ENCODE measurements at regions of chr1 and their contacts with region 1.

Region 1: DNA sequence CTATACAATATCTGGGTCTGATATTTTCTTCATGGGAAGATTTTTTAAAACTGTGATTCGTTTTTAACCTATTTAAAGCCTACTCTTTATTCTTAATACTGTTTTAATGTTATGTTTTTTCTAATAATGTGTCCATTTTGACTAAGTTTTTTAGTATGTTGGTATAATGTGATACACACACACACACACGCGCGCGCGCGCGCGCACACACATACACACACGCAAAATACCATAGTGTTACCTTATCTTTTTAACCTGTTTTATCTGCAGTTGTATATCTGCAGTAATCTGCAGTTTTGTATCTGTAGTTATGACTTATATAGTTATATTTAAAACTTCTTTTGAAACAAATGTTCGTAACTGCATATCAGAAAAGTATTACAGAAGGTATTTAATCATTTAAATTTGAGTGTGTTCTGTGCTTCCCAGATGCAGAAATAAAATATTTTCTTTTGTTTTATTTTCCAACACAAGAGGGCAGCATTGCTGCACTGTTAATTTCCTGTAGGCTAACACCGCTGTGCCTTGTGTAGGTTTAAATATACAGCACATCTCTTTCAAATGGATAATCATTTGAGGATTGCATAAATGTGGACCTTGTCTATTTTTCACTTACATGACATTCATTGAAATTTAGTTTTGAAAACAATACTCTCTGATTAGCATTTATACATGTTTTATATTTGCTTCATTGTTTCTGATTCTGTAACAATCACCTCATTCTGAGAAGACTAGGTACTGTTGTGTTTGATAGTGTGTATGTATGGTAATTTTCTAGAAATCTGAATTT is 166.1 kb downstream of the PDE4B start:
- DNase-seq: peak; percentile 43 to 55 (median 48)
- ATAC-seq: peak; percentile 85
- H3K4me3 ChIP-seq: no peak overlapping the region
- H3K27ac ChIP-seq: no peak overlapping the region
- H3K4me1 ChIP-seq: no peaks in the 10 kb centered on the region
- H3K27me3 ChIP-seq: peaks cover 3 to 7% of the 10 kb centered on the region in 2 experiments; a peak in 2 of 5 replicates
- CTCF ChIP-seq: peak; percentile 51 to 87 (median 75); a peak in 5 of 6 replicates
- EP300 ChIP-seq: no peak
- POLR2A ChIP-seq: no peak
- RAD21 ChIP-seq: peak; percentile 78 to 89

Region 2: DNA sequence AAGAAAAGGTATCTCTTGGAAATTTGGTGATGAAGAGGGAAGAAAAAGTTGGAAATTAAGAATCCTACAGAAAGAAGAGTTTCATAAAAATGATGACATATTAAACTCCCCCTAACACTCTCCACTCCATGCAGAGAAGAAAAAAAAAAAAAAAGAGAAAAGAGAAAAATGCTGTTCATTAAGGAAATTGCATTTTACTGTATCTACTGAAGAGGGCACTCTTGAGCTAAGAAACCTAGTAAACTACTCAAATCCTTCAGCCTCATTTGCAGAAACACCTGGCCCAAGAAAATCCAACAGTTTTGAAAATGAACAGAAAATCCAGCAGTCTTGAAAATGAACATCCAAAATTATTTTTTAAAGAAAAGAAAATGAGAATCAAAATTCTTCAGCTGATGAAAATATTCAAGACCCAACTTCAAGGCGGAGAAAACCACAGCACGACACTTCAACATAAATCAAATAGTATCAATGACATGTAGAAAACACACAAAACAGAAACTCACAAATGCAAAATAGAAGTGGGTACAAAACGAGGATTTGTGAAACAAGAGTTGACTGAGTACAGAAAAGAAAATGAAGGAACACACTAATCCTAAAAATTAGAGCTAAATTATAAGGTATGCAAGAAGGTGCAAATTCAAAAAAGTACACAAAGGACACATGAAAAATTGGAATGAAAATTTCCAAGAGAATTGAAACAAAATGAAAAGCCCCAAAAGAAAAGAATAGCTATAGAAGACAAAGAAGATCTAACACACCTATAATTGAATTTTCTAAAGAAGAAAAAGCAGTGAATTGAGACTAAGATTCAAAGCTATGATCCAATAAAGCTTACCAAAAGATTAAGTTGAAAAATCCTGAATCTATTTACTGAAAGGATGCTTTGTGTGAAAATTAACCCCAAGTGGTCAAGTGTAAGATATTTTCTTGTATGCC is 722.6 kb before region 1 on chr1:
- CTCF ChIA-PET with region 1: no interaction called
- POLR2A ChIA-PET with region 1: no interaction called
- in situ Hi-C with region 1: no loop called
- intact Hi-C with region 1: loop called (anchors 10 kb)
- DNase-seq: peak in 3 of 4 experiments; percentile 24 to 81 (median 43)
- ATAC-seq: peak; percentile 5; the same call in 2 of the 3 replicates
- H3K4me3 ChIP-seq: no peak overlapping the region
- H3K27ac ChIP-seq: no peak overlapping the region
- H3K4me1 ChIP-seq: peaks cover 29 to 42% of the 10 kb centered on the region in 2 experiments; a peak in 4 of 5 replicates
- H3K27me3 ChIP-seq: no peaks in the 10 kb centered on the region
- CTCF ChIP-seq: peak; percentile 42 to 81 (median 70); a peak in 5 of 6 replicates
- EP300 ChIP-seq: no peak
- POLR2A ChIP-seq: no peak
- RAD21 ChIP-seq: peak; percentile 74 to 91

Region 3: DNA sequence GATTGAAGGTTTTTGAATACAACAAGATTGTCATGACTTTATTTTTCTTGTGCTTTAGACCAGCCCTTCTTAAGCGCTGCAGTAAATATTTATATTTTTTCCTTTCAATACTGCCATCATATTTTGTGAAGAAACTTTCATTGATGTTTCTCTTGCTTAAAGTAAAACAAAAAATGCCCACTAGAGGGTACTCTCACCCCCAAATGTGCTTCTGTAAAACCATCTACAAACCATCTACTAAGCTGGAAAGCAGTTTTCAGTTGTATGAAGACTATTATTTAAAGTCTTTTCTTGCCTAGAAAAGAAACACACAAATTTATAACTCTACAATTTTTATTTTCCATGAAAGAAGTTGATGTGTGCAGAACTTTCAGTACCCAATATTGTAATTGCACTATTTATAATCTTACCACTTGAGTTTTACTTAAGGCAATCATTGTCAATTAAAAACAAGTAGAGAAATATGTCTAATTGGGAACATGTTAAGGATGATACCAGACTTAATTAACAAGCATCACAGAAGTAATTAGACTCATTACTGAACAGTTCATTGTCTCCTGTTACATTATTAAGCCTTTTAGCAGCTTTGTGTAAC is 527.5 kb before region 1 on chr1:
- CTCF ChIA-PET with region 1: no interaction called
- POLR2A ChIA-PET with region 1: no interaction called
- in situ Hi-C with region 1: no loop called
- intact Hi-C with region 1: loop called (anchors 10 kb)
- DNase-seq: peak; percentile 31 to 65 (median 40)
- ATAC-seq: peak; percentile 63
- H3K4me3 ChIP-seq: no peak overlapping the region
- H3K27ac ChIP-seq: no peak overlapping the region
- H3K4me1 ChIP-seq: peaks cover 0 to 6% of the 10 kb centered on the region in 2 experiments; a peak in 3 of 5 replicates
- H3K27me3 ChIP-seq: no peaks in the 10 kb centered on the region
- CTCF ChIP-seq: peak; percentile 43 to 70 (median 50); a peak in 4 of 6 replicates
- EP300 ChIP-seq: no peak
- POLR2A ChIP-seq: no peak
- RAD21 ChIP-seq: peak; percentile 74 to 84

Region 4: DNA sequence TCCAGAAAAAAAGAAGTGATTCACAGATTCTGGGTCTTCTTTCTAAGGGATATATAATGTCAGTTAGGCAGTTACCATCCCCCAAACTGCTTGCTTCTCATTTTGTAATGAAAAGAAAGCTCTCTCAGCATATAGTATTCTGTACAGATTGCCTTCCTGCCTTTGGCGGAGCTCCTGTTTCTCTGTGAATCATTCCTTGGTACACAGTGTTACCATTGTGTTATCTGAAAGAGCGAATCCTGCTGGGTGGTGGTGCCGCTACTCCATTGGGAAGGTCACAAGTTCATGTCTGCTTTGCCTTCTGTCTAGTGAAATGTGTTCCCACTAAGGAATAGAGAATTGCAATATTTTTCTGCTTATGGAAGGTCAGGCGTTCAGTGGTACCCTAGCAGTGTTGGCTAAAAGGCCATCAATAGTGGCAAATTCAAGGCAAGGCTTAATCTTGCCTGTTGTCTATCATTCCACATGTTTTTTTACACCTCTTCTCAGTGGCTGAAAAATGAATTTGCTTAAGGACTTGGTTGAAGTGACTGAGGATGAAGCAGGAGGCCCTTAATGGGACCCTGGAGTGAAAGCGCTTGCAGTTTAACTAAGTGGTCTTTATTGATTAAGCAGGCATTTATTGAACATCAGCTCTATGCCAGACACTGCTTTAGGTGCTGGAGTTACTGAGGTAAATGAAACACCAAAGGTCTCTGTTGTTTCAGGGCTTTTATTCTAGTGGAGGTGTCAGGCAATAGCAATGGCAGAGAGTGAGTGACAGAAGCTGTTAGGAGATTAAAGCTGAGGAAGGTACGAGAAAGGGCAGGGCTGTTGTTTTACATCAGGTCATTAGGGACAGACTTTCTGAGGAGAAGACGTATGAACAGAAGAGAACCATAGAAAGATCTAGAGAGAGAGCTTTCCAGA is 20.6 kb after region 1 on chr1:
- CTCF ChIA-PET with region 1: no interaction called
- POLR2A ChIA-PET with region 1: no interaction called
- in situ Hi-C with region 1: no loop called
- intact Hi-C with region 1: no loop called
- DNase-seq: no peak
- ATAC-seq: no peak
- H3K4me3 ChIP-seq: no peak overlapping the region
- H3K27ac ChIP-seq: no peak overlapping the region
- H3K4me1 ChIP-seq: no peaks in the 10 kb centered on the region
- H3K27me3 ChIP-seq: no peaks in the 10 kb centered on the region
- CTCF ChIP-seq: no peak
- EP300 ChIP-seq: no peak
- POLR2A ChIP-seq: no peak
- RAD21 ChIP-seq: no peak

Region 5: DNA sequence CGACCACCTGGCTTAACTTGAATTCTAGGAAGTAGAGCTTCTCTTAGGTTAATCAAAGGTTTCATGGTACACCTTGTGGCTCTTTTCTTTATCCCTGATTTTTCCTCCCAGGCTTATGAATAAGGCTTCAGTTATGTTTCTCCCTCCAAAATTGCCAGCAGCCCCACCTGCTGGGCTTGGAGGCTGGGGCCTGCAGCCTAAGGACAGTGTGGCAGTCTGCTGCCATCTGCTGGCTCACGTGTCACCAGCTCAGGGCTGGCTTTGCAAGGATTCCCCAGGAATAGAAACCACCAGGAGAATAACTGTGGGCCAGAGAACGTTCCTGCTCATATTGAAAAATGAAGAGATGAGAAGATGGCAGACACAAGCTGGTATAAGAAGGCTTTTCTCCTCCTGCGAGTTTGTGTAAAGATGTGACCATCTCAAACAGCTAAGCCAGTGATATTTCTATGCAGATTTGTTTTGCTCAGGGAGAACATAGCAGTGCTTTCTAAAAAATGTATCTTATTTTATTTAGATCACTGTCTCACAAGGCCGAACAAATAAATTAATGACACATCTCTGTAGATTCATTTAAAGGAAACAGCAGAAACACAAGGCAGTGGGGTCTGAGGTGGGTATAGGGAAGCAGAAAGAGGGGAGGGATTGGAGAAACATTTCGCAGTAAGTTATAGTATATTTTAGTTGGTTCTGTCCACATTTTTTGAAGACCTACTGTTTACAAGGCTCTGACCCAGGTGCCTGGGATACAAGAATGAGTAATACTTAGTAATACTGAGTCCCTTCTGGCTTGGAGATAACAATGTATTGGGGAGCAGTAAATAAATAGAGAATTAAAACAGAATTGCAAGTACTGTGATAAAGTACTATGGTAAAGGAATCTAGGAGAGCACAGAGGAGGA is 284.1 kb after region 1 on chr1:
- CTCF ChIA-PET with region 1: interaction called, 58 read pairs
- POLR2A ChIA-PET with region 1: interaction called, 6 read pairs
- in situ Hi-C with region 1: loop called (anchors 5 kb)
- intact Hi-C with region 1: loop called (anchors 1 kb)
- DNase-seq: peak; percentile 64 to 84 (median 70)
- ATAC-seq: peak; percentile 100
- H3K4me3 ChIP-seq: no peak overlapping the region
- H3K27ac ChIP-seq: no peak overlapping the region
- H3K4me1 ChIP-seq: no peaks in the 10 kb centered on the region
- H3K27me3 ChIP-seq: peaks cover 0 to 2% of the 10 kb centered on the region in 2 experiments; a peak in 1 of 5 replicates
- CTCF ChIP-seq: peak; percentile 99 to 100 (median 100)
- EP300 ChIP-seq: no peak
- POLR2A ChIP-seq: no peak
- RAD21 ChIP-seq: peak; percentile 93 to 98

Region 6: GRCh38 chr1:66446261-66447001 is 487.7 kb after region 1 on chr1:
- CTCF ChIA-PET with region 1: interaction called, 11 read pairs
- POLR2A ChIA-PET with region 1: no interaction called
- in situ Hi-C with region 1: loop called (anchors 25 kb)
- intact Hi-C with region 1: loop called (anchors 1 kb)
- DNase-seq: peak; percentile 41 to 57 (median 50)
- ATAC-seq: peak; percentile 79
- H3K4me3 ChIP-seq: no peak overlapping the region
- H3K27ac ChIP-seq: no peak overlapping the region
- H3K4me1 ChIP-seq: no peaks in the 10 kb centered on the region
- H3K27me3 ChIP-seq: no peaks in the 10 kb centered on the region
- CTCF ChIP-seq: peak; percentile 52 to 89 (median 56); a peak in 5 of 6 replicates
- EP300 ChIP-seq: no peak
- POLR2A ChIP-seq: no peak
- RAD21 ChIP-seq: peak; percentile 83 to 91

Region 7: GRCh38 chr1:66464802-66465201 is 506.0 kb after region 1 on chr1:
- CTCF ChIA-PET with region 1: no interaction called
- POLR2A ChIA-PET with region 1: no interaction called
- in situ Hi-C with region 1: loop called (anchors 25 kb)
- intact Hi-C with region 1: no loop called
- DNase-seq: no peak
- ATAC-seq: no peak
- H3K4me3 ChIP-seq: no peak overlapping the region
- H3K27ac ChIP-seq: no peak overlapping the region
- H3K4me1 ChIP-seq: no peaks in the 10 kb centered on the region
- H3K27me3 ChIP-seq: no peaks in the 10 kb centered on the region
- CTCF ChIP-seq: no peak
- EP300 ChIP-seq: no peak
- POLR2A ChIP-seq: no peak
- RAD21 ChIP-seq: no peak

Region 8: DNA sequence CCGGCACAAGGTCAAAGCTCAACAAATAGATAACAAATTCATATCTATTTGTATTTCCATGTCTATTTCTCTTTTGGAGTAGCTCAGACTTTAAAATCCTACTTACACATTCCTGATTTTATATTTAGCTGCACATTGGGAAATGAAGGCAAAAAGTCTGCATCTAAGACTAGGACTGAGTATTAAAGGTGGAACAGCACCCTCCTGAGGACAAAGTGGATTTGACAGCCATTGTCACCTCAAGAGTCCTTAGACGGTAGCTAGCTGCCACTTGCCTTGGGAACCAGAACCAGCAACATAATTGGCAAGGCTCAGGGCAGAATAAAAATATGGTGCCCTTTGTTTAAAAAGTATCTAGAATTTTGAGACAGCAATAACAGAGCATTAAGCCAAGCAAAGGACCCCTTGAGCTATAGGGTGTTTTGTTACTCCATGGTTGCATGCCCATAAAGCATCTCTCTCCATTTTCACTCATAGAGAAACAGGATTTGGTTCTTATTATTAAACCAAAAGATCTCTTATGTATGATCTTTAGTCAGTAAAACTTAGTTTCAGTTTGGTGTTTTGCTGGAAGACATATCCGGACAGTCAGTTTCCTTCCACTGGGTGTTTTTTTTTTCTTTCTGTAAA is 545.2 kb after region 1 on chr1:
- CTCF ChIA-PET with region 1: interaction called, 3 read pairs
- POLR2A ChIA-PET with region 1: no interaction called
- in situ Hi-C with region 1: no loop called
- intact Hi-C with region 1: loop called (anchors 5 kb)
- DNase-seq: peak; percentile 33 to 59 (median 34)
- ATAC-seq: peak; percentile 91
- H3K4me3 ChIP-seq: no peak overlapping the region
- H3K27ac ChIP-seq: no peak overlapping the region
- H3K4me1 ChIP-seq: no peaks in the 10 kb centered on the region
- H3K27me3 ChIP-seq: peaks cover 0 to 4% of the 10 kb centered on the region in 2 experiments; a peak in 1 of 5 replicates
- CTCF ChIP-seq: peak; percentile 53 to 74 (median 68)
- EP300 ChIP-seq: no peak
- POLR2A ChIP-seq: no peak
- RAD21 ChIP-seq: peak; percentile 40 to 66

Measured in K562 (cell line).